ENCODE measurements at regions of chr22 and their contacts with region 1.

Region 1: DNA sequence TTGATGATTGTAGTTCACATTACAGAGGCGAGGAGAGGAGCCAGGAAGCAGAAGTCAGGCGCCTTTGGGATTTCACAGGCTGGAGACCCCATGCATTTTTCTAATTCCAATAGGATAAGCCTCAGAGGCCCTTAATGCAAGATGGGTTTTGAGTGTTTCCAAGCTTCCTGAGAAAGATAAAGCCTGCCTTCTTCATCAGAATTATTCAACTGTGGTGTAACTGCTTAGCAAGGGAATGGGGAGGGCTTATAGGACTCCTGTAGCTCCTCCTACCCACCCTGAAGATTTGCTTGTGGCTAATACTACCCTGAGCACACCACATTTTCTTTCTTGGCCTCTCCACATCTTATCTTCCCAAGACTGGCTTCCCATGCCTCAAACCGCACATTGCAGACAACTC is 151.1 kb upstream of the ISX start:
- DNase-seq: no peak
- ATAC-seq: no peak
- H3K4me3 ChIP-seq: no peak overlapping the region
- H3K27ac ChIP-seq: no peak overlapping the region
- H3K4me1 ChIP-seq: no peaks in the 10 kb centered on the region
- H3K27me3 ChIP-seq: peaks cover 0 to 3% (median 0%) of the 10 kb centered on the region in 4 donors
- CTCF ChIP-seq: no peak

Region 2: GRCh38 chr22:34975721-34976120 is 60.9 kb after region 1 on chr22:
- intact Hi-C with region 1: loop called in 1 of 3 experiments (anchors 10 kb)
- DNase-seq: no peak
- ATAC-seq: no peak
- H3K4me3 ChIP-seq: no peak overlapping the region
- H3K27ac ChIP-seq: no peak overlapping the region
- H3K4me1 ChIP-seq: no peaks in the 10 kb centered on the region
- H3K27me3 ChIP-seq: no peaks in the 10 kb centered on the region
- CTCF ChIP-seq: no peak

Region 3: GRCh38 chr22:35231585-35232084 is 316.8 kb after region 1 on chr22:
- intact Hi-C with region 1: no loop called
- DNase-seq: peak; percentile 50 to 82 (median 77)
- ATAC-seq: peak; percentile 91 to 98 (median 95)
- H3K4me3 ChIP-seq: no peak overlapping the region
- H3K27ac ChIP-seq: no peak overlapping the region
- H3K4me1 ChIP-seq: no peaks in the 10 kb centered on the region
- H3K27me3 ChIP-seq: no peaks in the 10 kb centered on the region
- CTCF ChIP-seq: peak; percentile 92 to 97 (median 94)

Measured in pancreas (tissue), 10 donors.